CD8-positive, alpha-beta T cell (primary cell): ENCODE measurements at regions of chr3 and their contacts with region 1.

Region 1: DNA sequence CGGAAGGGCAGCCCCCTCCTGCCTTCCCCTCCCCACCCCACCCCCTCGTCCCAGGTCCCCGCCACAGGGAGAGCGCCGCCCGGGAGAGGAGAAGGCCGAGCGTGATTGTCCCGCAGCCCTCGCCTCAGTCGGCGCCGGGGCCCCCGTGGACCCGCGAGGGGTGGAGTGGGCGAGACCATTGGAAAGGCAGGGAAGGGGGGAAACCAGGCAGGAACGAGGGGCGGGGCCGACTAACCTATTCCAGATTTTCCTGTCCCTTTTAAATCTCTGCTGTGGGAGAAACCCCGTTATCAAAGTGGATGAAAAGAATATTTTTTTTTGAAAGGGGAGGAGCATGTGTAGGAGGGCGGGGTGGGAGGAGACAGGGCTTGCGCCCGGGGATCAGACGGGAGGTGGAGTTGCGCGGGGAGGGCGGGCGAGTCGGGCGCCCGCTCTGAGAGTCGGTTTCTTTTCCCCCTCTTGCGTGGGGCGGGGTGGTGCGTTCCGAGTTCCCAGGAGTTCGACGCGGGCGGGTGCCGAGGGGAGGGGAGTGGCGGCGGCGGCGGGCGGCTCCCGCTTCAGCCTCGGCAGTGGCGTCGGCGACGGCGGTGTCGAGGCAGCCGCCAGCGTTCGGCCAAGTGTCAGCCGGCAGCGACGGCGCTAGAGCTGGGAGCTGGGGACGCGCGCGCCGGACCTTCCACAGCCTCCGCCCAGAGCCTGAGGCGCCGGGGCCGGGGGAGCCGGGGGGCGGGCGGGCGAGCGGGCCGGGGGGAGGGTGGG is at the start of gene NECTIN3:
- DNase-seq: peak; percentile 64 to 94 (median 85)
- ATAC-seq: peak; percentile 93
- H3K4me3 ChIP-seq: peak within 1 kb of the TSS; percentile 69 to 75
- H3K4me3 Mint-ChIP-seq: peak within 1 kb of the TSS; percentile 98
- H3K27ac ChIP-seq: peak within 1 kb of the TSS in 1 of 2 experiments; percentile 57
- H3K27ac Mint-ChIP-seq: peak within 1 kb of the TSS; percentile 89
- H3K4me1 ChIP-seq: peaks cover 12% of the 10 kb centered on the region
- H3K4me1 Mint-ChIP-seq: peaks cover 35% of the 10 kb centered on the region
- H3K27me3 ChIP-seq: peaks cover 0 to 5% of the 10 kb centered on the region in 2 experiments
- H3K27me3 Mint-ChIP-seq: peaks cover 30% of the 10 kb centered on the region
- CTCF ChIP-seq: no peak
- total RNA-seq, gene NECTIN3: 7.6 to 9.2 TPM

Region 2: GRCh38 chr3:109731620-109732473 is 1339.6 kb before region 1 on chr3:
- CTCF ChIA-PET with region 1: no interaction called
- POLR2A ChIA-PET with region 1: no interaction called
- intact Hi-C with region 1: loop called in 1 of 2 experiments (anchors 5 kb)
- DNase-seq: peak; percentile 16 to 77 (median 62)
- ATAC-seq: peak; percentile 91
- H3K4me3 ChIP-seq: no peak overlapping the region
- H3K4me3 Mint-ChIP-seq: no peak overlapping the region
- H3K27ac ChIP-seq: no peak overlapping the region
- H3K27ac Mint-ChIP-seq: no peak overlapping the region
- H3K4me1 ChIP-seq: peaks cover 6% of the 10 kb centered on the region
- H3K4me1 Mint-ChIP-seq: peaks cover 7% of the 10 kb centered on the region
- H3K27me3 ChIP-seq: no peaks in the 10 kb centered on the region
- H3K27me3 Mint-ChIP-seq: no peaks in the 10 kb centered on the region
- CTCF ChIP-seq: peak; percentile 100

Region 3: GRCh38 chr3:111252779-111253178 is 181.3 kb after region 1 on chr3:
- CTCF ChIA-PET with region 1: no interaction called
- POLR2A ChIA-PET with region 1: no interaction called
- intact Hi-C with region 1: loop called in 1 of 2 experiments (anchors 10 kb)
- DNase-seq: peak in 2 of 9 experiments; percentile 12 to 24
- ATAC-seq: no peak
- H3K4me3 ChIP-seq: no peak overlapping the region
- H3K4me3 Mint-ChIP-seq: no peak overlapping the region
- H3K27ac ChIP-seq: no peak overlapping the region
- H3K27ac Mint-ChIP-seq: no peak overlapping the region
- H3K4me1 ChIP-seq: peaks cover 15% of the 10 kb centered on the region
- H3K4me1 Mint-ChIP-seq: peaks cover 29% of the 10 kb centered on the region
- H3K27me3 ChIP-seq: no peaks in the 10 kb centered on the region
- H3K27me3 Mint-ChIP-seq: no peaks in the 10 kb centered on the region
- CTCF ChIP-seq: no peak

Region 4: DNA sequence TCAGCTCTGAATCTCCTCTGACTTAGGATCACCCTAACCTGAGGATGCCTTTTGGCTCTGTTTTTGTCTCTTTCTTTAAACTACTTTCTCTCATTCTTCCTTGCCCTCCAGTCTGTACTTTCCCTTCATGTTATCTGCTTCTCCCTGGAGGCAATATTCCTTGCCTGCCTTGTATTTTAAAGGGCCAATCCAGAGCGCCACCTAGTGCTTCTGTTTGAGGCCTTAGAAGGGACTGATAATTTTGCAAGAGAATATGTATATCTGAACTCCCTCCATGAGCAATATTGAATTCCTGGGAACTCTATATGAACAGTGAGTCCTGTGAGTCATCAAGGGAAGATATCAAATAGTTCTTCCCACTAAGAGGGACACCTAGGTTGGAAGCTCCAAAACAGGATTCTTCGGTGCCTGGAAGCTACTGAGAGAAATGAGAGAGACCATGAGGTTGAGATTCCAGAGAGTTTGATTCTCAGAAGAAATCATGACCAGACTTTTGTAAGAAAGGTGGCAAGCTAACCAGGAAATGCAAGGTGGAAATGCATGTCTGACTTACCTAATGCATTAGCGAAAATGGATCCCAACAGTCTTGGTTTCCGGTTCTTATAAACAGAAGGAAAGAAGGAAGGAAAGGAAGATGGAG is 266.7 kb after region 1 on chr3:
- CTCF ChIA-PET with region 1: no interaction called
- POLR2A ChIA-PET with region 1: no interaction called
- intact Hi-C with region 1: loop called in 1 of 2 experiments (anchors 5 kb)
- DNase-seq: peak in 8 of 9 experiments; percentile 11 to 63 (median 40)
- ATAC-seq: no peak
- H3K4me3 ChIP-seq: no peak overlapping the region
- H3K4me3 Mint-ChIP-seq: no peak overlapping the region
- H3K27ac ChIP-seq: no peak overlapping the region
- H3K27ac Mint-ChIP-seq: no peak overlapping the region
- H3K4me1 ChIP-seq: no peaks in the 10 kb centered on the region
- H3K4me1 Mint-ChIP-seq: peaks cover 10% of the 10 kb centered on the region
- H3K27me3 ChIP-seq: no peaks in the 10 kb centered on the region
- H3K27me3 Mint-ChIP-seq: no peaks in the 10 kb centered on the region
- CTCF ChIP-seq: peak; percentile 53

Region 5: DNA sequence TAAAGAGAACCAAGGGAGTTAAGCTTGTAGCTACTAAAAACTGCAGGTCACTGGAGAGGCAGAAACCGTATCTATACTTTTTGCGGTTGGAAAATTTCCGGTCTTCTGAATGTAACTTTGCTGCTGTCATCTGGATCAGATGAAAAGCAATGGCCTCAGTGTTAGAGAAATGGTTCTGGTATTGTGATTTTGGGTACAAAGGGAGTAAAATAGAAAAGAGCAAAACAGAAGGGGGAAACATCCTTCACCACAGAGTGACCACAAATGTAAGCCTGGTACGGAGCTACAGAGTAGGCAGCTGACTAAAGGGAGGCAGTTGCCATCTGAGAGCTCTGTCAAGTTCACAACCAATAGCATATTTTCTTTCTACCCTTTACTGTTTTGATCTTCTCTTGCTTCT is 476.2 kb after region 1 on chr3:
- CTCF ChIA-PET with region 1: no interaction called
- POLR2A ChIA-PET with region 1: no interaction called
- intact Hi-C with region 1: loop called (anchors 2 to 5 kb)
- DNase-seq: peak in 7 of 9 experiments; percentile 26 to 86 (median 66)
- ATAC-seq: peak; percentile 76
- H3K4me3 ChIP-seq: peak overlapping the region; percentile 33 to 67
- H3K4me3 Mint-ChIP-seq: no peak overlapping the region
- H3K27ac ChIP-seq: peak overlapping the region; percentile 57 to 89
- H3K27ac Mint-ChIP-seq: no peak overlapping the region
- H3K4me1 ChIP-seq: peaks cover 82% of the 10 kb centered on the region
- H3K4me1 Mint-ChIP-seq: peaks cover 36% of the 10 kb centered on the region
- H3K27me3 ChIP-seq: no peaks in the 10 kb centered on the region
- H3K27me3 Mint-ChIP-seq: no peaks in the 10 kb centered on the region
- CTCF ChIP-seq: no peak

Region 6: DNA sequence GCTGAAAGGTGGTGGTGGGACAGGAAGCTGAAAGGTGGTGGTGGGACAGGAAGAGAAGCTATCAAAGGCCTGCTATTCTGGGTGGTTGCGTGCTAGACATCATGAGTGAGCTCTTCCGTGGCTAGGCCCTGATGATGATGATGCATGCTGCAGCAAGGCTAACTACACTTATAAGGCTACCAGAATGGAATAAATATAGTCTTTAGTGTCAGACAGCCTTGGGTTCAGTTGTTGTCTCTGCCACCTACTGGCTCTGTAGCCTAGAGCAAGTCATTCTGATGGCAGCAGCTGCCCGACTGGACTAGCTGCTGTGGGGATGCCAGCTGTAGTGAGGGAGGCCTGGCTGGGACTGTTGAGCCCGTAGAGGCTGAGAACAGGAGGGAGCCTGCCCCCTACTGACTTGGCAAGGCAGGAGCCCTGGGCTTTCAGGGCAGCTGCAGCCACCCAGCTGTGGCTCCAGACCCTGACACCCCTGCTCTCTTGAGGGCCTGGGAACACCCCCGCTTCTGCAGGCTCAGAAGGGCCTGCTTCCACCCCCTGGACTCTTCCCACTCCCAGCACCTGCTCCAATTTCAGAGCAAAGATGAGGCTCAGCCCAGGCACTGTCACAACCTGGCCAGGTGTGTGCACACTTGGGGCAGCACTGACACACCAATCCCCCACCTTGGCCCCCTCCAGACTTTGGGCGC is 545.1 kb after region 1 on chr3:
- CTCF ChIA-PET with region 1: no interaction called
- POLR2A ChIA-PET with region 1: no interaction called
- intact Hi-C with region 1: loop called (anchors 5 kb)
- DNase-seq: peak; percentile 24 to 91 (median 63)
- ATAC-seq: peak; percentile 93
- H3K4me3 ChIP-seq: no peak overlapping the region
- H3K4me3 Mint-ChIP-seq: peak overlapping the region; percentile 24
- H3K27ac ChIP-seq: peak overlapping the region; percentile 42 to 79
- H3K27ac Mint-ChIP-seq: peak overlapping the region; percentile 95
- H3K4me1 ChIP-seq: peaks cover 38% of the 10 kb centered on the region
- H3K4me1 Mint-ChIP-seq: peaks cover 55% of the 10 kb centered on the region
- H3K27me3 ChIP-seq: no peaks in the 10 kb centered on the region
- H3K27me3 Mint-ChIP-seq: no peaks in the 10 kb centered on the region
- CTCF ChIP-seq: peak; percentile 60

Region 7: DNA sequence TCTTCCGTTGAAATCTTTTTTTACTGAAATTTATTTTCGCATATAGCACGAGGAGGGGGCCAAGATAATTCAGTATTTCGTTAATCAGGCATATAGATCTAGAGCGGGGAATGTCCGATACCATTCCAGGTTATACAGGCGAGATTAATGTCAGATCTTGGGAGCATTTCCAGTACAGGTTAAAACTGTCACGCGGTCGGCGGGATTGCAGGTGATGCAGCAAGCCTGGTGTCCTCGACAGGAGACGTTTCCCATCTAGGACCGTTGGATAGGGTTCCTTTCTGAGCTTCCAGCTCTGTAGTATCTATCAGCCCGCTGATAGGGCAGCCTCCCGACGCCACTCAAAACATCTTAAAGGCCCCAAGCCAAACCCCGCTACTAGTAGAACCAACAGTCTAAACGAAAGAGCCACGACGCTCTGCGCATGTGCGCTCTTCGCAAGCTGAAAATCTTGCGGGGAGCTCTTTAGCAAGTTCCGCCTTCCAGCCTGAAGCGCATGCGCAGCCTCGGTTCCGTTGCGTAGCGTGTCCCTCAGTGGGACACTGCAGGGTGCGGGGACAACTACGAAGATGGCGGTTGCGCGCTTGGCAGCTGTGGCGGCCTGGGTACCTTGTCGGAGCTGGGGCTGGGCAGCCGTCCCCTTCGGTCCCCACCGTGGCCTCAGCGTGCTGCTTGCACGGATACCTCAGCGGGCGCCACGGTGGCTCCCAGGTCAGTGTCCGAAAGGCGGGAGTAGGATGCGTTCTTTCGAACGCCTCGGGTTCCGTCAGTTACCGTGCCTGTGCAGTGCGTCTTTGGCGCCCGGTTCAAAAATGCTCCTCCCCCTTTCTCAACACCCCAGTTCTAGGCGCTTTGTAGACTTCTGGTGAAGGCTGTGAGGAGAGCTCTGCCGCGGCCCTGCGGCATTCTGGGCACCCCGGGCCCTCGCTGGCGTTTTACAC is 907.3 kb after region 1 on chr3 and contains the start of gene ABHD10:
- CTCF ChIA-PET with region 1: no interaction called
- POLR2A ChIA-PET with region 1: no interaction called
- intact Hi-C with region 1: loop called (anchors 1 to 10 kb)
- DNase-seq: peak; percentile 90 to 99 (median 97)
- ATAC-seq: peak; percentile 94
- H3K4me3 ChIP-seq: peak within 1 kb of the TSS; percentile 89
- H3K4me3 Mint-ChIP-seq: peak within 1 kb of the TSS; percentile 94
- H3K27ac ChIP-seq: peak within 1 kb of the TSS; percentile 80 to 85
- H3K27ac Mint-ChIP-seq: peak within 1 kb of the TSS; percentile 95
- H3K4me1 ChIP-seq: peaks cover 31% of the 10 kb centered on the region
- H3K4me1 Mint-ChIP-seq: peaks cover 44% of the 10 kb centered on the region
- H3K27me3 ChIP-seq: no peaks in the 10 kb centered on the region
- H3K27me3 Mint-ChIP-seq: no peaks in the 10 kb centered on the region
- CTCF ChIP-seq: no peak
- total RNA-seq, gene ABHD10: 19.8 to 26.0 TPM